ENCODE measurements at regions of chr16 and their contacts with region 1.

Region 1: DNA sequence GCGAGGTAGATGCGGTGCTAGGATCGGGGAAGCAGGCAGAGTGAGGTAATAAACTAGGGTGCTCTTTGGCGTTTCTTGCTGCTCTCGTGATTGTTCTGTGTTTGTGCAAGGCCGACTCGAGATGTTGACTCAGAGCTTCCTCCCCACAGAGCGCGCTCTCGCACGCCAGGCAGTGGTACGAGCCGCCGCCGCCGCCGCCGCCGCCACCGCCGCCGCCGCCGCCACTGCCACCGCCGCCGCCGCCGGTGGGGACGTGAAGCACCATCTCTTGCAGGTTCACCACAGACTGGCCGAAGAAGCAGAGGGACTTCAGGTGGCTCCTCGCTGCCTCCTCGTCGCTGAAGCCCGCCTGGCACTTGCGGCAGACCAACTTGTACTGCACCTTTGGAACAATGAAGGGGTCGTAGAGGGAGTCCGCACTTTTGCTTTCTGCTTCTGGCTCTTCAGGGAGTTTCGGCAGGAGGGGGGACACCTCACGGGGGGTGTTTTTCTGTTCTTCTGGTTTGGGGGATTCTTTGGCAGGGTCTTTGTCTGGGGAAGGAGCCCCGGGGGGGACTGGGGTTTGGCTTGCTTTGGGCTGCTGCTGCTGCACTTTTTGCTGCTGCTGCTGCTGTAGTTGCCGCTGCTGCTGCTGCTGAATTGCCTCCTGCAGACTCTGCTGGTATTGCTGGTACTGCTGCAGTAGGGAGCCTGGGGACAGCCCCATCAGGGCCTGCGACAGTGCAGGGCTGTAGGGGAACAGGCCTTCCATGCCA is 260.2 kb downstream of the ZFHX3 start:
- DNase-seq: peak; percentile 70
- ATAC-seq: peak; percentile 79
- H3K4me3 ChIP-seq: peak overlapping the region; percentile 56
- H3K27ac ChIP-seq: peak overlapping the region; percentile 63
- H3K4me1 ChIP-seq: peaks cover 17% of the 10 kb centered on the region
- H3K27me3 ChIP-seq: no peaks in the 10 kb centered on the region
- CTCF ChIP-seq: no peak

Region 2: DNA sequence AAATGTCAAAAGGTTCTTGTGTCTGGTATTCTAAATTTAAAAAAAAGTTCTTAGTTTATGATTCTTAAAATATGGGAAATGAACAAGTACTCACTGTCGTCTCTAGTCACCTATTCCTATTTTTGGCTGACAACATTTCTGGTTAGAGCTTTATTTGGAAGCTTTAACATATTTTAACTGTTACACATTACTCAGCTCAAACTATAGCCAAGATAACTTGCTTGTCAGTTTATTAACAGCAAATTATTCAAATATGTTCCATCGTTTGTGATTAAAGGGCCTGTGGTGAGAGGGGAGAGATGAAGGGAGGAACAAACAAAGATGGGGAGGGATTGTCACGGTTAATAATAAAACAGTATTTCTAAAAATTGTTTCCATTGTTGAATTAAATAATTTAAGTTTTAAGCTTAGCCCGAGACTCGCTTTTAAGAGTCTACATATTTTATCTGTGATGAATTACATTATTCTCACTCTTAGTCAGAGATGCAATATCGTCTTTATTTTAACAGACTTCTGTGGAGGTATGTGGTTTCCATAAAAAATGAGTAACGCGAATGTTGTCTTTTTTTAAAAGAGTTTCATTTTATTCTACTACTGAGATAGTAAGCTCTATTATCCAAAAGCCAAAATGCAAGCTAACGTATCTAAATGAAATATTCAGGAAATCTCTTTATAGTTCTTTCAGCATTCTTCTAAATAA is 293.8 kb before region 1 on chr16:
- CTCF ChIA-PET with region 1: no interaction called
- POLR2A ChIA-PET with region 1: interaction called, 11 read pairs
- intact Hi-C with region 1: no loop called
- DNase-seq: peak; percentile 70
- ATAC-seq: peak; percentile 86
- H3K4me3 ChIP-seq: peak overlapping the region; percentile 38
- H3K27ac ChIP-seq: peak overlapping the region; percentile 61
- H3K4me1 ChIP-seq: peaks cover 20% of the 10 kb centered on the region
- H3K27me3 ChIP-seq: no peaks in the 10 kb centered on the region
- CTCF ChIP-seq: no peak

Region 3: GRCh38 chr16:72664509-72665225 is 123.0 kb before region 1 on chr16:
- CTCF ChIA-PET with region 1: no interaction called
- POLR2A ChIA-PET with region 1: no interaction called
- intact Hi-C with region 1: loop called (anchors 5 kb)
- DNase-seq: peak; percentile 94
- ATAC-seq: peak; percentile 100
- H3K4me3 ChIP-seq: peak overlapping the region; percentile 91
- H3K27ac ChIP-seq: peak overlapping the region; percentile 54
- H3K4me1 ChIP-seq: peaks cover 4% of the 10 kb centered on the region; the same call in 1 of the 2 replicates
- H3K27me3 ChIP-seq: no peaks in the 10 kb centered on the region
- CTCF ChIP-seq: no peak